CD4-positive, alpha-beta memory T cell (primary cell): ENCODE measurements at regions of chr7 and their contacts with region 1.

Region 1: DNA sequence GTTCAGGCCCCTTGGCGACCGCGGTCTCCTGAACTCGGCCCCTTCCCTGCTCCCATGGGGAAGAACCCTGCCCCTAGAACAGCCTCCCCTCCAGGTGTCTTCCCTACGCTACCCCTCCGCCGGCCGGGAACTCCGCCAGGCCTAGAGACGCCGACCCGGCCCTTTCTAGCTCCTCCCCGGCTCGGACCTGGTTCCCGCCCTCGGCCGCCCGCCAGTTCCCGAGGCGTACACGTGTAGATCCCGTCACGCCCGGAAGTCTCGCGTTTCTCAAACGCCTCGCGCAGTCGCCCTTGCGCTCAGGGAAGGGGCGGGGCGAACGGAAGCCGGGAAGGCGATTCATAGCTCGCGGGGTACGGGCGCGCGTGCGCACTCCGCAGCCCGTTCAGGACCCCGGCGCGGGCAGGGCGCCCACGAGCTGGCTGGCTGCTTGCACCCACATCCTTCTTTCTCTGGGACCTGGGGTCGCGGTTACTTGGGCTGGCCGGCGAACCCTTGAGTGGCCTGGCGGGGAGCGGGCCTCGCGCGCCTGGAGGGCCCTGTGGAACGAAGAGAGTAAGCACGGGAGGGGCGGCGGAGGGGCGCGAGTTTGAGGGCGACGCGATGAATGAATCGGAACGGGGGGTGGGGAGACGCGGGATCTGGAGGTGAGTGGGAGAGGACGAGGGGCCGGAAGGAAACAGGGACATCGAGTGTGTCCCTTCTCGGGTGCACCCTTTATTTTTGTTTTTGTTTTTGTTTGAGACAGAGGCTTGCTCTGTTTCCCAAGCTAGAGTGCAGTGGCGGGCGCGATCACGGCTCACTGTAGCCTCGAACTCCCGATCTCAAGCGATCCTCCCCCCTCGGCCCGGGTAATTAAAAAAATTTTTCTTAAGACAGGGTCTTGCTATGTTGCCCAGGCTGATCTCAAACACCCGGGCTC is at the start of gene POP7:
- DNase-seq: peak; percentile 96 to 97 (median 97)
- H3K4me3 ChIP-seq: peak within 1 kb of the TSS; percentile 89 to 90
- H3K4me3 Mint-ChIP-seq: peak within 1 kb of the TSS; percentile 93 to 100 (median 96)
- H3K27ac ChIP-seq: peak within 1 kb of the TSS; percentile 79
- H3K27ac Mint-ChIP-seq: peak within 1 kb of the TSS; percentile 90 to 98 (median 96)
- H3K4me1 ChIP-seq: peaks cover 16% of the 10 kb centered on the region
- H3K4me1 Mint-ChIP-seq: peaks cover 5 to 18% (median 11%) of the 10 kb centered on the region in 4 donors
- H3K27me3 ChIP-seq: no peaks in the 10 kb centered on the region
- H3K27me3 Mint-ChIP-seq: peaks cover 2 to 3% of the 10 kb centered on the region in 2 donors
- total RNA-seq, gene POP7: 14.6 to 16.0 TPM

Region 2: GRCh38 chr7:100586266-100587025 is 119.6 kb before region 1 on chr7 and contains the start of gene FBXO24:
- CTCF ChIA-PET with region 1: interaction called, 31 read pairs
- POLR2A ChIA-PET with region 1: interaction called, 29 read pairs
- intact Hi-C with region 1: loop called (anchors 1 kb)
- DNase-seq: peak; percentile 99 to 100 (median 100)
- H3K4me3 ChIP-seq: peak within 1 kb of the TSS; percentile 77 to 98
- H3K4me3 Mint-ChIP-seq: peak within 1 kb of the TSS; percentile 92 to 99 (median 97)
- H3K27ac ChIP-seq: peak within 1 kb of the TSS; percentile 79
- H3K27ac Mint-ChIP-seq: peak within 1 kb of the TSS; percentile 86 to 99 (median 97)
- H3K4me1 ChIP-seq: peaks cover 38% of the 10 kb centered on the region
- H3K4me1 Mint-ChIP-seq: peaks cover 11 to 27% (median 16%) of the 10 kb centered on the region in 4 donors
- H3K27me3 ChIP-seq: no peaks in the 10 kb centered on the region
- H3K27me3 Mint-ChIP-seq: peaks cover 0 to 2% of the 10 kb centered on the region in 2 donors
- total RNA-seq, gene FBXO24: 1.6 to 2.1 TPM

Region 3: GRCh38 chr7:100626530-100627237 is 79.3 kb before region 1 on chr7:
- CTCF ChIA-PET with region 1: interaction called, 12 read pairs
- POLR2A ChIA-PET with region 1: interaction called, 7 read pairs
- intact Hi-C with region 1: no loop called
- DNase-seq: peak; percentile 79 to 91 (median 82)
- H3K4me3 ChIP-seq: peak overlapping the region; percentile 36 to 67
- H3K4me3 Mint-ChIP-seq: peak overlapping the region; percentile 61 to 83 (median 76)
- H3K27ac ChIP-seq: peak overlapping the region; percentile 63
- H3K27ac Mint-ChIP-seq: peak overlapping the region; percentile 45 to 94 (median 83)
- H3K4me1 ChIP-seq: peaks cover 24% of the 10 kb centered on the region
- H3K4me1 Mint-ChIP-seq: peaks cover 15 to 41% (median 28%) of the 10 kb centered on the region in 4 donors
- H3K27me3 ChIP-seq: no peaks in the 10 kb centered on the region
- H3K27me3 Mint-ChIP-seq: no peaks in the 10 kb centered on the region

Region 4: DNA sequence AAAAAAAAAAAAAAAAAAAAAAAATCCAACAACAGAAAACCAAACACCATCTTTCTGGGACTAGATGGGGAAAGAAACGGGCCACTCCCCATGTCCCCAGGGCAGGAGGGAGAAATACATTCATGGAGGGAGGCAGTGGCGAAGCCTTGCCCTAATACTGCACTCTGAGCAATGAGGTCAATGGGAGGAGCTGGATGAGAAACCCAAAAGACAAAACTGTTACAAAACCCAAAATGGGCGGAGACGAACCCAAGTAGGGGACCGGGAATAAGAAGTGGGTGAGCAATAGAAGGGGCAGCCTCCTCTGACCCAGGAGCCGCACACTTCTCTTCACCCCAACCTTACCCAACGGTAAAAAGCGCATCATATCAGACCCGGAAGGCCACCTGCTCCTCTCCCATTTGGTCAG is 25.8 kb before region 1 on chr7:
- CTCF ChIA-PET with region 1: interaction called, 15 read pairs
- POLR2A ChIA-PET with region 1: interaction called, 29 read pairs
- intact Hi-C with region 1: no loop called
- DNase-seq: no peak
- H3K4me3 ChIP-seq: no peak overlapping the region
- H3K4me3 Mint-ChIP-seq: peak overlapping the region in 2 of 8 donors; percentile 7 to 18
- H3K27ac ChIP-seq: peak overlapping the region; percentile 9
- H3K27ac Mint-ChIP-seq: peak overlapping the region; percentile 37 to 90 (median 75)
- H3K4me1 ChIP-seq: peaks cover 41% of the 10 kb centered on the region
- H3K4me1 Mint-ChIP-seq: peaks cover 7 to 43% (median 29%) of the 10 kb centered on the region in 4 donors
- H3K27me3 ChIP-seq: no peaks in the 10 kb centered on the region
- H3K27me3 Mint-ChIP-seq: peaks cover 0 to 1% of the 10 kb centered on the region in 2 donors

Region 5: DNA sequence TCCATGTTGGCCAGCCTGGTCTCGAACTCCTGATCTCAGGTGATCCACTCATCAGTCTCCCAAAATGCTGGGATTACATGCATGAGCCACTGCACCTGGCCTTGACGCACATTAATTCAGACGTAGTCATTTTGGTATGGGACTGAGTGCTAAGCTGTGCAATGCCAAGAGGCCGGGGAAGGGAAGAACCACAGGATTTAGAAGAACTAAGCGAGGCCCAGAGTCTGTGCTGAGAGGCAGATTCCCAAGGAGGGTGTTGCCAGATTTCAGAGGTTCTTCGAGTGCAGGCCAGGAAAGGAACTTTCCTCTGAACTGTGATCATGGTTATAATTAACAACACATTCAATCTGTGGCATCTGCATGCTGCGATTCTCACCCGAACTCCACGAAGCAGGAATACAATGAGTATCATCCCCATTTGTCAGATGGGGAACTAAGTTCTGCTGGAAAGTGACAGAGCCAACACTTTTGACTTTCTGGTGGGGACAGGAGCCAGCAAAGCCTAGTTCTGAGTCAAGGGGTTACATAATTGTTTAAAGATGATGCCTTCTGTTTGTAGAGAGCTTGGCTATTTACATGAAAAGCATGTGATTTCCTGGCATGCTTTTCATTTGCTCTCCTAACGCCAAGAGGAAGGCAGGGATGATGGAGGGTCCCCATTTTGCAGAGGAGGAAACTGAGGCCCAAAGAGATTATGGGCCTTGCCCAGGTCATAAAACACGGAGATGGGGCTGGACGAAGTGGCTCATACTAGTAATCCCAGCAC is 21.2 kb after region 1 on chr7:
- CTCF ChIA-PET with region 1: interaction called, 45 read pairs
- POLR2A ChIA-PET with region 1: interaction called, 3 read pairs
- intact Hi-C with region 1: loop called (anchors 1 kb)
- DNase-seq: no peak
- H3K4me3 ChIP-seq: no peak overlapping the region
- H3K4me3 Mint-ChIP-seq: no peak overlapping the region
- H3K27ac ChIP-seq: no peak overlapping the region
- H3K27ac Mint-ChIP-seq: no peak overlapping the region
- H3K4me1 ChIP-seq: peaks cover 5% of the 10 kb centered on the region
- H3K4me1 Mint-ChIP-seq: peaks cover 0 to 4% (median 3%) of the 10 kb centered on the region in 4 donors
- H3K27me3 ChIP-seq: no peaks in the 10 kb centered on the region
- H3K27me3 Mint-ChIP-seq: peaks cover 12 to 22% of the 10 kb centered on the region in 2 donors

Region 6: DNA sequence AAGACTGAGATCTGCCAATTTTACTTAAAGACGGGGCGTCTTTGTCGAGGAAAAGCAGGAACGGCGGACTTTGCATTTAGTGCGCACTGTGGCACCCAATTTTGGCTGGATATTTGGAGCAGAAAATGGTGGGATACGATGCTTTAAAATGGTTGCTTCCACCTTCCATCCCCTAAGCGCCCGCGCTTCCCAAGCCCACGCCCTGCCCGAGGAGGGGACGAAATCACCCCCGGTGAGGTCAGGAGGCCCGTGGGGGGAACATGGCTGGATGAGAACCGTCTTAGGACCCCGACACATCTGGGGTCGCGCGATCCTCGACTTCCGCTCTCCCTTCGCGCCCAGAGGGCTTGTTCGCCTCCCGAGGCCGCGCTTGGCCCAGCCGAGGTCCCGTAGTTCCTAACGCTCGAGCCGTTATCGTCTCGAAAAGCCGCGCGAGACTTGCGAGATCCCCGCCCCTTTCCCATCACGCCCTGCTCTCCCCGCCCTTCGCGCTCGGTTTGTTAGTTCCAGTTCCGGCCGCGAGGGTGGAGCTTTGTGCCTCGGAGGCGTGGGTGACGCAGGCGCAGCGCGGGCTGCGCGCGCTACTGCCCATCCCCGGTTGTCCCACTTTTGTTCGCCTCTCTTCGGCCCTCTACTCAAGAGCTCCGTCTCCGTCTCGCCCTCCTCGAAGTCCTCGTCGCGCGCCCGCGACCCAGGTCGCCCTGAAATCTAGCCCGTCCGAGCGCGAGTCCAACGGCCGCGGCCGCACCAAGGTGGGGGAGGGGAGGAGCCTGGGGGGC is 168.8 kb after region 1 on chr7 and contains the start of gene SRRT:
- CTCF ChIA-PET with region 1: no interaction called
- POLR2A ChIA-PET with region 1: interaction called, 12 read pairs
- intact Hi-C with region 1: no loop called
- DNase-seq: peak; percentile 98
- H3K4me3 ChIP-seq: peak within 1 kb of the TSS; percentile 92 to 99
- H3K4me3 Mint-ChIP-seq: peak within 1 kb of the TSS; percentile 98 to 99 (median 99)
- H3K27ac ChIP-seq: peak within 1 kb of the TSS; percentile 91
- H3K27ac Mint-ChIP-seq: peak within 1 kb of the TSS; percentile 96 to 99 (median 98)
- H3K4me1 ChIP-seq: peaks cover 49% of the 10 kb centered on the region
- H3K4me1 Mint-ChIP-seq: peaks cover 26 to 61% (median 47%) of the 10 kb centered on the region in 4 donors
- H3K27me3 ChIP-seq: no peaks in the 10 kb centered on the region
- H3K27me3 Mint-ChIP-seq: no peaks in the 10 kb centered on the region
- total RNA-seq, gene SRRT: 264 to 272 TPM

Region 7: DNA sequence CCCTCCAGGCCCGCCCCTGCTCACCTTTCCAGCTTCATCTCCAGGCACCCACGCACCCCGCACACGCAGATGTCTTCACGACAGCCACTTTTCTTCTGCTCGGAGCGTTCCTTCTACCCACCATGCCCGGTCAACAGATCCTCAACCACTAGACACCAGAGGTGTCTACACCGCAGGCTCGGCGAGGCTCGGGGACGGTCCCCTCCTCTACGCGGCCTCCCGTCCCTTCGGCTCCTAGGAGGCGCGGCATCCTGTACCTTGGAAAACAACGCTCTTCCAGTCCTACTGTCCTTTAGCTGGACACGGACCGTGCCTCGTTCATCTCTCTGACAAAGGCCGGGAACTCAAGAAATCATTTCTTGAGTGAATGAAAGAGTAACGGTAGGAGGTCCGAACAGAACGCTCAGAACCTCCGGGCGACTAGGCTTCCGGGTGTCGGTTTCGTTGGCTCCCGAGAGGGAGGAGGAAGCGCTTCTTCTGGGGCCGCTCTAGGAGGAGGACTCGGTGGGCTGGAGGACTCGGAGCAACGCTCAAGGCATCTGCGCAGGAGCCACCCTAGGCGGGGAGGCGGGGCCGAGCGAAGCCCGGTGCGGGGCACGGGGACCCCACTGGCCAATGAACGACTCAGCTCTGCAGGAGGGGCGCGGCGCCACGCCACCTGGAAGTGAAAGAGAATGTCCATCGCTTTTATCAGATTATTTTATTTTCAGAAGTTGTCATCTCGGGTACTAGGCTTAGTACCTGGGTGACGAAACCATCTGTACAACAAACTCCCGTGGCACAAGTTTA is 546.1 kb after region 1 on chr7:
- CTCF ChIA-PET with region 1: no interaction called
- POLR2A ChIA-PET with region 1: no interaction called
- intact Hi-C with region 1: loop called (anchors 10 kb)
- DNase-seq: peak; percentile 97 to 99 (median 98)
- H3K4me3 ChIP-seq: peak overlapping the region; percentile 97 to 98
- H3K4me3 Mint-ChIP-seq: peak overlapping the region; percentile 99 to 100 (median 99)
- H3K27ac ChIP-seq: peak overlapping the region; percentile 83
- H3K27ac Mint-ChIP-seq: peak overlapping the region; percentile 93 to 99 (median 98)
- H3K4me1 ChIP-seq: peaks cover 18% of the 10 kb centered on the region
- H3K4me1 Mint-ChIP-seq: peaks cover 18 to 39% (median 27%) of the 10 kb centered on the region in 4 donors
- H3K27me3 ChIP-seq: no peaks in the 10 kb centered on the region
- H3K27me3 Mint-ChIP-seq: peaks cover 1 to 4% of the 10 kb centered on the region in 2 donors